ENCODE measurements at regions of chr14 and their contacts with region 1.

Region 1: DNA sequence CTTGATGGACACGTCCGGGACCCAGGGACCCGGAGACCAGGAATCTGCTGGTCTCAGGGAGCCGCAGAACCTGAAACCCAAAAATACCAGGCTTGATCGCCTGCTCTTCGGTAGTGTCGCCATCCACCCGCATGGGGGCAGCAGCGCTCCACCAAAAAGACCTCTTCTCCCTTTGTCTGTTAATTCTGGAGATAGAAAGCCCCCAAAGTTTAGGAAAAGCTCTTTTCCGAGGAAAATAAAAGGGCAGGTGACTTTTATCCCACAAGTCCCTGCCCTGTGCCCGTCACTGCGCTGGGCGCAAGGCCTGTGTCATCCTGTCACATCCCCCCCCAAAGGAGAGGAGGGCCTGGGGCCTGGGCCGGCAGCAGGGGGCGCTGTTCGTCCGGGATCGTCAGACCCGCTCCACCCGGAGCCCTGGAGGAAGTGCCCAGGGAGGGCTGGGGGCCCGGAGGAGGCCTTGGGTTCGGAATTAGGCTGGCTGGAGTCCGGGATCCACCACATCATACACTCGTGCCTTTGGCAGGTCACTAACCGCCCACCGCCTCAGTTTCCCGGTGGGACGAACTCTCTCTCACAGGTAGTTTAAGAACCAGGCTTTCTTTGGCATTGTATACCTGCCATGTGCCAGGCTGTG is 31.9 kb downstream of the DAD1 start:
- DNase-seq: peak; percentile 84 to 88 (median 85)
- H3K4me3 ChIP-seq: peak overlapping the region in 6 of 7 experiments; percentile 0 to 76 (median 54)
- H3K27ac ChIP-seq: peak overlapping the region; percentile 61 to 84
- H3K4me1 ChIP-seq: peaks cover 30 to 78% (median 67%) of the 10 kb centered on the region in 4 experiments
- H3K27me3 ChIP-seq: no peaks in the 10 kb centered on the region

Region 2: DNA sequence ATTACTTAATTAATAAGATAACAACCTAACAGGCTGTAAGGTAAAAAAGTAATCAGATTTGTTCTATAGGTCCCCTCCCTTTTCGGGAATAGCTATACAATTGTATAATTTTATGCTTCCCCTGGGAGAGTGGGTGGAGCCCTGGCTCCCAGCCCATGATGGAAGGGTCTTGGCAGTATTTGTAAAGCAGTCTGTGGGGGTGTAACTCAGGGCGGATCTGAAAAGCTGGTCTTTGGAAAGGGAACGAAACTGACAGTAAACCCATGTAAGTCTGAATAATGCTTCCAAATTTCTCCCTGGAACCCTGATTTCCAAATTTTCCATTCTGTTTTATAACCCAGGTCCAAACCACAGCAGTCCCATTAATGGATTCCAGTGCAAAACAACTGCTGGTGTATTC is 78.4 kb before region 1 on chr14:
- CTCF ChIA-PET with region 1: interaction called, 17 read pairs
- POLR2A ChIA-PET with region 1: interaction called, 3 read pairs
- DNase-seq: no peak
- H3K4me3 ChIP-seq: no peak overlapping the region
- H3K27ac ChIP-seq: no peak overlapping the region
- H3K4me1 ChIP-seq: peaks cover 12 to 41% (median 21%) of the 10 kb centered on the region in 4 experiments
- H3K27me3 ChIP-seq: no peaks in the 10 kb centered on the region

Region 3: DNA sequence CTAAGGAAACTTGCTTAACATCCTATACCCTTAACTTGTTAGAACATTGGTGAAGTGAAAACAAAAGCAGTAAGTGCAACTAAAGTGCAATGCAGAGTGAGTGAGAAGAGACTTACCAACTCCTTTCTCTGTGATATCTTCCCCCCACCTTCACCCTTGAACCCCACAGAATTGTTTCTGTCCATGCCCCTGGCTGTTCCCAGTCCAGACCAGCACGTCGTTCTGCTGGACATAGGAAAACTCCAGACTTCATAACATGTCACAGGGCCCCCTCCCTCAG is 60.0 kb before region 1 on chr14:
- CTCF ChIA-PET with region 1: interaction called, 11 read pairs
- POLR2A ChIA-PET with region 1: no interaction called
- DNase-seq: no peak
- H3K4me3 ChIP-seq: no peak overlapping the region
- H3K27ac ChIP-seq: no peak overlapping the region
- H3K4me1 ChIP-seq: peaks cover 0 to 17% (median 10%) of the 10 kb centered on the region in 4 experiments
- H3K27me3 ChIP-seq: peaks cover 0 to 13% (median 7%) of the 10 kb centered on the region in 5 experiments

Region 4: DNA sequence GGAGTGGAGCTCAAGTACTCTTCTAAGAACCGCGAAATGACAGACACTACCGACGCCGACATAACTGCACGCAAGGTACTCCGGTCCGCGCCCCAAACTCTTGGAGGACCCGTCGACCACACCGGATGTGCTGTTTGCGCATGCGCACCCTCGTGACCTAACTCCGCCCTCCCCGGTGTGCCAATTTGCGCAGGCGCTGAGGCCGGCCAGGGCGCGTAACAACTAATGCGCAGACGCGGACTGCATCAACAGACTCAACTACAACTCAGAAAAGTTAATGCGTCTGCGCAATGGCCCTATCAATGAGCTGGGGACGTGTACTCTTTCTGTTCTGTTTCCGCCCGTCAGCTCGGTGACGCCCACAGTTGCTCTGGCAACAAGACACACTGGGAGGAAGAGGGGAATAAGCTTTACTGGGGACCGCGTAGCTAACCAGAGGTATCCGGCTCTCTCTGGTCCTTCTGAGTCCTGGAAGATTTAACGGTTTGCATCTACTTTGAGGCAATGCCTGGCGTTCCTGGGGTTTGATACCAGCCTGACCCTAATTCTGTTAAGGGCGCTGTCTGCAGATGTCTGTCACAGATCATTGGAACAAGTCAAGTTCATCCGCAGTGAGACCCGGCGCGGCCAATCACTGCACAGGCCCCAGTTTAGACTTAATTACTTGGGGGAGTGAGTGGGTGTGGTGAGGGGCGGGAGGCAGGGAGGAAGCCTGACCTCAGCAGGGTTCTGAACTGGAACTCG is 32.2 kb after region 1 on chr14 and contains the start of gene DAD1:
- CTCF ChIA-PET with region 1: interaction called, 10 read pairs
- POLR2A ChIA-PET with region 1: interaction called, 4 read pairs
- DNase-seq: peak; percentile 100
- H3K4me3 ChIP-seq: peak within 1 kb of the TSS; percentile 58 to 98 (median 94)
- H3K27ac ChIP-seq: peak within 1 kb of the TSS; percentile 93 to 94
- H3K4me1 ChIP-seq: peaks cover 14 to 36% (median 27%) of the 10 kb centered on the region in 4 experiments
- H3K27me3 ChIP-seq: no peaks in the 10 kb centered on the region

Region 5: DNA sequence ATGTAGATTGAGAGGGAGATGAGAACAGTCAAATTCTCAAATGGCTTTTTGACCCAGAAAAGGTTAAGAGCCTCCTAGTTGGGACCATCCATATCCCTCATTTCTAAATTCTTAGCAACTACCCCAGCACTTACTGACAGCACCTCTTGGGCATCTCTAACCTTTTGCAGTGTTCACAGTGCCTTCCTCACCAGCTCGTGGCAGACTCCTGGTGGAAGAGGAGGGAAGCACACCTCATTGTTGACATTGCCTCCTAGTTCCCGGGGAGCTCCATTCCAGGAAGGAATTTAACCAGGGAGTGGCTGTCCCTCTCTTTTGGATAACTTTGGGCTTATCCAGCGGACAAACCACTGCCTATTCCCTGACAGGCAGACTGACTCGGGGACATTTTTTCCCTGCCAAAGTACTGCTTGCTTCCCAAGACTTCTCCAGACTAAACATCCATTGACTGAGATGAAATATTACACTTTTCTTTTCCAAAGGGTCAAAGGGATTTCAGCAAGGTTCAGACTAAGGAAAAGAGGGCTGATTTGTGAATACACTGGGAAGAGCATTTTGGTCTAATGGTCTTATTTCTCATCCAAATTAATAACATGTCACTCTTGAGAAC is 96.0 kb after region 1 on chr14:
- CTCF ChIA-PET with region 1: interaction called, 15 read pairs
- POLR2A ChIA-PET with region 1: no interaction called
- DNase-seq: peak; percentile 56 to 76 (median 75)
- H3K4me3 ChIP-seq: no peak overlapping the region
- H3K27ac ChIP-seq: no peak overlapping the region
- H3K4me1 ChIP-seq: peaks cover 0 to 2% (median 0%) of the 10 kb centered on the region in 4 experiments
- H3K27me3 ChIP-seq: peaks cover 0 to 3% (median 0%) of the 10 kb centered on the region in 5 experiments

Region 6: GRCh38 chr14:22753586-22753985 is 196.5 kb after region 1 on chr14:
- CTCF ChIA-PET with region 1: no interaction called
- POLR2A ChIA-PET with region 1: no interaction called
- DNase-seq: no peak
- H3K4me3 ChIP-seq: no peak overlapping the region
- H3K27ac ChIP-seq: no peak overlapping the region
- H3K4me1 ChIP-seq: peaks cover 0 to 7% (median 4%) of the 10 kb centered on the region in 4 experiments
- H3K27me3 ChIP-seq: no peaks in the 10 kb centered on the region

Region 7: GRCh38 chr14:22822571-22823098 is 265.5 kb after region 1 on chr14:
- CTCF ChIA-PET with region 1: interaction called, 10 read pairs
- POLR2A ChIA-PET with region 1: interaction called, 3 read pairs
- DNase-seq: peak; percentile 70 to 74 (median 73)
- H3K4me3 ChIP-seq: peak overlapping the region in 6 of 7 experiments; percentile 20 to 62 (median 42)
- H3K27ac ChIP-seq: no peak overlapping the region
- H3K4me1 ChIP-seq: peaks cover 12 to 38% (median 36%) of the 10 kb centered on the region in 4 experiments
- H3K27me3 ChIP-seq: peaks cover 0 to 29% (median 2%) of the 10 kb centered on the region in 5 experiments

Measured in common myeloid progenitor, CD34-positive (primary cell).